ENCODE measurements at regions of chr10 and their contacts with region 1.

Region 1: GRCh38 chr10:119041326-119041725 is 11.8 kb downstream of the NANOS1 start:
- DNase-seq: no peak
- H3K4me3 ChIP-seq: no peak overlapping the region
- H3K27ac ChIP-seq: no peak overlapping the region
- H3K27me3 ChIP-seq: no peaks in the 10 kb centered on the region
- CTCF ChIP-seq: no peak

Region 2: DNA sequence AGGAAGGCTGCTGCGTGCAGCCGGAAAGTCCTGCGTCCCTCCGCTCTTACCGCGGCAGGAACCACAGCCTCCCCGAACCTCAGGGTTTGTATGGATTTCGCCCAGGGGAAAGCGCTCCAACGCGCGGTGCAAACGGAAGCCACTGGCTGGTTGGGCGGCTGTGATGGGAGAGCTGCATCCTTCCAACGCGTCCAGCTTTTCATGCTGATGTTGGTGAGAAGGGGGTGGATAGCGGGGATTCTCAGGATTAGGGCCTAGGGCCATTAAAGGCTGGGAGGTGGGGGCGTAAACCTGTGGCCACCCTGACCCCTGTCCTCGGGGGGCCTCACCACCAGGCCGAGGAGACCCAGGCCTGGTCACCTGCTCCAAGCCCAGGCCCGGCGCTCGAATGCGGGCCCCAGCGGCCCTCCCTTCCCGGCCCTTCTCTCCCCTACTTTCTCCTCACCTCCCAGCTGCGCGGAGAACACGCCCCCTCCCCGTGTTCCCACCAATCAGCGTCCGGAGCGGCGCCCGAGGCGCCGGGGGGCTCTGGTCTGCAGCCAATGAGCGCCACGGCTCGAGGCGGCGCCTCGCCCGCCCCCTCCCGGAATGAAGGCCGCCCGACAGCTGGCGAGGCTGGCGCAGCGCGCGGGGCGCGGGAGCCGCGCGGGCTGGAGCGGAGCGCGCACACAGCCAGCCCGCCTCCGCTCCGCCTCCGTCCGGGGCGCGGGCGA is 12.3 kb before region 1 on chr10:
- CTCF ChIA-PET with region 1: no interaction called
- POLR2A ChIA-PET with region 1: interaction called, 10 read pairs
- DNase-seq: peak; percentile 44
- H3K4me3 ChIP-seq: peak overlapping the region; percentile 54
- H3K27ac ChIP-seq: no peak overlapping the region
- H3K27me3 ChIP-seq: peaks cover 3% of the 10 kb centered on the region
- CTCF ChIP-seq: no peak